KBM-7 (cell line): ENCODE measurements at regions of chr6 and their contacts with region 1.

Region 1: GRCh38 chr6:158686791-158687381 is 37.0 kb downstream of the SYTL3 start:
- DNase-seq: peak; percentile 73

Region 2: GRCh38 chr6:158213925-158214674 is 472.8 kb before region 1 on chr6:
- in situ Hi-C with region 1: loop called (anchors 25 kb)
- DNase-seq: peak; percentile 85

Region 3: GRCh38 chr6:158793432-158793831 is 106.5 kb after region 1 on chr6:
- in situ Hi-C with region 1: no loop called
- DNase-seq: peak; percentile 30

Region 4: DNA sequence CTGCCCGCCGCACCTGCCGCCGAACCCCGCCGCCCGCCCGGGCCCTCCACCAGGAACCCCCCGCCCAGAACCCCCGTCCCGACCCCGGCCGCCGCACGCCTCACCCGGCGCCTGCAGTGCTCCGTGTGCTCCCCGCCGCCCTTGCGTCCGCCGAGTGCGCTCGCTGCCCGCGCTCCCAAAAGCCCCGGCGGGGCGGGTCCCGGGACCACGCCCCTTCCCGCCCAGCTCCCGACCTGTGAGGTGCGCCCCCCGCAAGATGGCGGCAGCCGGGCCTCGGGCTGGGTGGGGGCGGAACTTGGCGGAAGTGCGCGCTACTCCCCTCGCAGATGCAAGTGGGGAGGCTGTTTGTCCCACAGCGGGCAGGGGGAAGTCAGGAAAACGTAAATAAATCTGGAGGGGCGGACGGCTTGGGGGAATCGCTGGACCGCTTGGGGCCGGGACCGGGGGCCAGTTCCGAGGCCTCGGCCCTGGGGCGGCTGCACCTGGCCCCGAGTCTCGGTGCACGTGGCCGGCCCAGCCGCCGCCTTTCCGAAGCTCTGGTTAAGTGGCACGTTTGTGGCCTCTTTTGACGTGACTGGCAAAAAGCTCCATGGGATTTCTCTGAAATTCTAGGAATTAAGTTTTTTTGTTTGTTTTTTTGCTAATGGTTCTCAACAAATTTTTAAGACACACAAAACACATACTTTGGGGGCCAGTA is 132.5 kb after region 1 on chr6 and contains the start of gene EZR:
- in situ Hi-C with region 1: no loop called
- DNase-seq: peak; percentile 88